SK-N-SH (cell line): ENCODE measurements at regions of chr19 and their contacts with region 1.

Region 1: GRCh38 chr19:47013041-47013517 is 6.6 kb upstream of the NPAS1 start:
- DNase-seq: peak; percentile 92
- H3K4me3 ChIP-seq: no peak overlapping the region; a peak in 1 of 4 replicates
- H3K27ac ChIP-seq: no peak overlapping the region
- H3K4me1 ChIP-seq: peaks cover 0 to 3% of the 10 kb centered on the region in 2 experiments; a peak in 1 of 4 replicates
- H3K27me3 ChIP-seq: no peaks in the 10 kb centered on the region
- CTCF ChIP-seq: peak; percentile 95
- EP300 ChIP-seq: 0 out of 4 replicates have a peak, but pooled peaks of 1 of the 2 experiments have one; percentile 17
- RAD21 ChIP-seq: peak; percentile 93

Region 2: DNA sequence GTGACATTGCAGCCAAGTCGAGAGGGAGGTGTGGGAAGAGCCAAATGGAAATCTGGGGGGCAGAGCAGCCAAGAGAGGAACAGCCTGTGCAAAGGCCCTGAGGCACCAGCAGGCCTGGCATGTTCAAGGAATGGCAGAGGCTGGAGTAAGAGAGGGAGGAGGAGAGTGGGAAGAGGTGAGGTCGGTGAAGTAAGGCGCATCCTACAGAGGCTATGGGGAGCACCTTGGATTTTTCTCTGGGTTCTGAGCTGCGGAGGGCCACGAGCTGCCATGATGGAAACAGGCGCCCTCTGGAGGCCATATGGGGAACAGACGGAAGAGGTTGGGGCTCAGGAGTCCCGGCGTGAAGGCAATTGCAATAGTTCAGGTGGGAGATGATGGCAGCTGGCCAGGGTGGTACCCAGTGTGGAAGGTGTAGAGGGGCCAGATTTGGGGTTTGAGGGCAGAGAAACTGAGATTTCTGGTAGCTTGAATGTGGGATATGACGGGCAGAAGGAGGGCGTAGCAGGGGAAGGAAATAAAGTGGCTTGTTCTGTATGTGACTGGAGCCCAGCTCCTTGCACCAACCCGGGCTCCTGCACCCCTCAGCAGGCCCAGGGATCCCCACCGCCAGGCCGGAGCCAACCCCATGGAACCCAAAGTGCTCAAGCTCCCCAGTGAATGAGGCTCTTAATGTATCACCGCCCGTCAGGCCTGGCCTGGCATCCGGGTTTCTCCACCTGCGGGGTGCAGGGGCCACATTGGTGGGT is 246.3 kb before region 1 on chr19:
- CTCF ChIA-PET with region 1: no interaction called
- POLR2A ChIA-PET with region 1: no interaction called
- DNase-seq: peak; percentile 74
- H3K4me3 ChIP-seq: no peak overlapping the region
- H3K27ac ChIP-seq: no peak overlapping the region
- H3K4me1 ChIP-seq: no peaks in the 10 kb centered on the region
- H3K27me3 ChIP-seq: no peaks in the 10 kb centered on the region
- CTCF ChIP-seq: peak; percentile 76
- EP300 ChIP-seq: no peak
- RAD21 ChIP-seq: peak; percentile 33

Region 3: DNA sequence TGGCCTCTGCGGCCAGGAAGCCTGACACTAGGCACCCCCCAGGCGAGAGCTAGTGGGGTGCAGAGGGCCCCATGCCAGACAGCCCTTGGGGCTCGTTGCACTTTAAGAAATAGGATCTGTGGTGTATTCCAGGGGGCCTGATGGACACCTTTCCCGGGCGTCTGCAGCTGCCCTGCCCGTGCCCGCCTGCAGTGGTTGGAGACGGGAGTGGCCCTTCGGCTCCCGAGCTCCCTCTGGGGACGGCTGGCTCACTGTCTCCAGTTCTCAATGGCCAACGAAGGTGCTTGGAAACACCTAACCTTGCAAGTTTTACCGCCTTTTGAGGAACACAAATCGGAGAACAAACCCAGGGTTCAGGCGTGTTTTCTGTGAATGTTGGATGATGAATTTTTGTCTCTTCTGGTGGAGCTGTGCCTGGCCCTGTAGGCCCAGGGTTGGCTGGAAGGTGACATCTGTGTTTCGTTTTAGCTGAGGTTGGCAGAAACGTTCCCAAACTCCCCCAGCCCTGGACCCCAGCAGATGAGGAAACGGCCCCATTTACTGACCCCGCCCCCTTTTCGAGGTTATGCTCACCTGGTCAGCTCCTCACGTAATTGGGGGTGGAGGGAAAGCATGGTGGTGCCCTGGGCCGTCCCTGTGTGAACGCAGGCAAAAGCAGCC is 10.8 kb before region 1 on chr19:
- CTCF ChIA-PET with region 1: interaction called, 18 read pairs
- POLR2A ChIA-PET with region 1: no interaction called
- DNase-seq: no peak
- H3K4me3 ChIP-seq: no peak overlapping the region
- H3K27ac ChIP-seq: no peak overlapping the region
- H3K4me1 ChIP-seq: peaks cover 0 to 9% of the 10 kb centered on the region in 2 experiments; a peak in 1 of 4 replicates
- H3K27me3 ChIP-seq: no peaks in the 10 kb centered on the region
- CTCF ChIP-seq: no peak
- EP300 ChIP-seq: no peak
- RAD21 ChIP-seq: no peak

Region 4: DNA sequence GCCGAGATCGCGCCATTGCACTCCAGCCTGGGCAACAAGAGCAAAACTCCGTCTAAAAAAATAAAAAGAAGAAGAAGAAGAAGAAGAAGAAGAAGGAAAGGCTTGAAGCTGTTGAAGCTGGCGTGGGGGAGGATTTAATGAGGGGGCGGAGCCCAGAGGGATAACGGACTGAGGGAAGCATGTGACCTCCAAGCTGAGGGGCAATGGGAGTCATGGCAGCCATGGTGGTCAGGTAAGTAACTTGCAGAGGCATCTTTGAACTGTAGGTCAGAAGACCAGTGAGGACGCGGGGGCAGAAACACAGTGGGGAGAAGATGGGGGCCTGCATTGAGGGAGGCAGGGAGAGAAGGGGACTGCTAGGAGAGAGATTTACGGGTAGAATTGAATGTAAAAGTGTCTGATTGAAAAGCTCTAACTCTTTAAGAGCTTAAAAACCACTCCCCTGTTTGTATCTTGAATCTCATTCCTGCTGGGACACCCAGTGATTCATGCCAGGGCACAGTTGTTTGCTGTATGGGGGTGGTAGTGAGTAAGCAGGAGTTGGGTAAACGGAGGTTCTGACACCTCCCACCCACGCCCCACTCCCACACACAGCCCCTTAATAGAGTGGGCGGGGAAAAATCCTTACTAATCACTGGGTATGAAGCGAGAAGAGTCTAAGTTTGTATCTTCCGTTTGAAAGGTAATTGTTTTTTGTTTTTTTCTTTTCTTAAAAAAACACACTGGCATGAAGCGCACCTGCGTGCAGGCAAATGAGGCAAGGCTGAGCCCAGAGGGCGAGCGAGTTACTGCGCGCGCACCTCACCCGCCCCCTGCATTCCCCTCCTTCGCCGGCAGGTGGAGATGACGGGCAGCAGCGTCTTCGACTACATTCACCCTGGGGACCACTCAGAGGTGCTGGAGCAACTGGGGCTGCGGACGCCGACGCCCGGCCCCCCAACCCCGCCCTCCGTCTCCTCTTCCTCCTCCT is 22.3 kb after region 1 on chr19:
- CTCF ChIA-PET with region 1: interaction called, 98 read pairs
- POLR2A ChIA-PET with region 1: no interaction called
- DNase-seq: peak; percentile 96
- H3K4me3 ChIP-seq: peak overlapping the region; percentile 48 to 64
- H3K27ac ChIP-seq: peak overlapping the region; percentile 28 to 71; a peak in 2 of 4 replicates
- H3K4me1 ChIP-seq: peaks cover 0 to 5% of the 10 kb centered on the region in 2 experiments; a peak in 1 of 4 replicates
- H3K27me3 ChIP-seq: no peaks in the 10 kb centered on the region
- CTCF ChIP-seq: peak; percentile 80
- EP300 ChIP-seq: no peak
- RAD21 ChIP-seq: peak; percentile 57

Region 5: DNA sequence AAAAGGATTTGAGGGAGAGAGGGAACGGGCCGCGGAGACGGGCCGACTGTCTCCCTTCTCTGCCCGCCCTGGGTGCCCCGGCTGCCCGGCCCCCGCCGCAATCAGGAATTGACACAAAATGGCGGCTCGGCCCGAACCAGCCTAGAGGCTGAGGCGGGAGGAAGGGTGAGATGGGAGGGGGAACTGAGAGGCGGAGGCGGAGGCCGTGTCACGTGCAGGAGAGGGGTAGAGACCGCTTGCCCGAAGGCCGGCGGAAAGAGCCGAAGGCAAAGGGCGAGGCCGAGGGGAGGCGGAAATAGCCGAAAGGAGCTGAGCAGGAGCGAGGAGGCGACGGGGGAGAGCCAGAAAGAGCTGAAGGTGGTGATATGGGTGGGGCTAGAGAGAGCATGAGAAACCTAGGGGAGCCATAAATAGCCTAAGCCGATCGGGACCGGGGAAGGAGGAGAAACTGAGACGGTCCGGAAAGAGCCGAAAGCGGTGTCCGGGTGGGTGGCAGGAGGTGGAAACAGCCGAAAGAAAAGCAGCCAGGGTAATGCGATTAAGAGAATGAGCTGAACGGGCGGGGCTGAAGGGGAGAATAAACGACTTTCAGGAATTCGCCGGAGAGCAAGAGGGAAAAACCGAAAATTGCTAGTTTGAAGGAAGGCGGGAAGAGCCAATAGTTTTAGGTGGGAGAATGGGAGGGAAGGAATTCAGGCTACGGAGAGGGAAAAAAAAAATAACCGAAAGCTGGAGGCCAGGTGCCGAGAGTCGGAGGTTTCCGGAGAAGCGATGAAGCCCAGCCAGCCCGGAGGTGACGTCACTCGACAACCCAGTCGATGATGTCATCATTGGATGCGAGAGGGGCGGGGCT is 100.1 kb after region 1 on chr19 and contains the start of gene ZC3H4:
- CTCF ChIA-PET with region 1: interaction called, 10 read pairs
- POLR2A ChIA-PET with region 1: interaction called, 3 read pairs
- DNase-seq: peak; percentile 92
- H3K4me3 ChIP-seq: peak within 1 kb of the TSS; percentile 78 to 92
- H3K27ac ChIP-seq: peak within 1 kb of the TSS; percentile 99 to 100
- H3K4me1 ChIP-seq: peaks cover 18 to 23% of the 10 kb centered on the region in 2 experiments
- H3K27me3 ChIP-seq: no peaks in the 10 kb centered on the region
- CTCF ChIP-seq: no peak
- EP300 ChIP-seq: peak in 1 of 2 experiments; percentile 28; a peak in 1 of 4 replicates
- RAD21 ChIP-seq: no peak
- polyA plus RNA-seq, gene ZC3H4: 3.9 and 7.6 TPM in 2 replicates

Region 6: GRCh38 chr19:47132194-47132852 is 119.2 kb after region 1 on chr19:
- CTCF ChIA-PET with region 1: interaction called, 10 read pairs
- POLR2A ChIA-PET with region 1: no interaction called
- DNase-seq: no peak
- H3K4me3 ChIP-seq: peak overlapping the region in 1 of 2 experiments; percentile 80; a peak in 2 of 4 replicates
- H3K27ac ChIP-seq: no peak overlapping the region
- H3K4me1 ChIP-seq: peaks cover 2 to 18% of the 10 kb centered on the region in 2 experiments; a peak in 3 of 4 replicates
- H3K27me3 ChIP-seq: no peaks in the 10 kb centered on the region
- CTCF ChIP-seq: no peak
- EP300 ChIP-seq: no peak
- RAD21 ChIP-seq: no peak

Region 7: DNA sequence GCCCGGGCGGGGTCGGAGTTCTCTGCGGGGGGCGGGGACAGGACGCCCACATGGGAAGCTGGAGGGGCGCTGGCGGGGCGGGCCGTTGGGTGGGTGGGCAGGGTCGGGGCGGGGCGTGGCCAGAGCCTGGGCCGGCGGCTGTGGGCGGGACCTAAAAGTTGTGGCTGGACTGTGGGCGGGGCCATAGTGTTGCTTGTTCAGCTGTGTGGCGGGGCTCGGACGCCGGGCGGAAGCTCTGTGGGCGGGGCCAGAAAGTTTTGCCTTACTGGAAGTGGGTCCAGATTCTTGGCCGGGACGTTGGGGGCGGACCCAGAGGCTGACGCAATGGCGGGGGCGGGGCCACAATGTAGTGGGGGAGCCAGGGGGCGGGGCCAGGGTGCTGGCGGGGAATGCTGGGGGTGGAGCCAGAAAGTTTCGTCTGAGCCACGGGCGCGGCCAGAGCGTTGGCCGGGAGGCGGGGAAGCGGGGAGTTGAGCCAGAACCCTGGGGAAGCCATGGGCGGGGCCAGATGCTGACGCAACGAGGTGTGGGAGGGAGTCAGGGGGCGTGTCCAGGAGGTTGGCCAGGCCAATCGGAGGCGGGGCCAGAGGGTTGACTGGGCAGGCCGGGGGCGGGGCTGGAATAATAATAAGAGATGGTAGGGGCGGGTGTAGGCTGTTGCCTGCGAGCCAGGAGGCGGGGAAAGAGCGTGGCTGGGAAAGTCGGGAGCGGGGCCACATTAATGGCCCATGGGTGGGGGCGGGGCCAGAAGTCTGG is 243.8 kb after region 1 on chr19:
- CTCF ChIA-PET with region 1: no interaction called
- POLR2A ChIA-PET with region 1: no interaction called
- DNase-seq: peak; percentile 97
- H3K4me3 ChIP-seq: peak overlapping the region; percentile 69 to 72
- H3K27ac ChIP-seq: peak overlapping the region; percentile 94
- H3K4me1 ChIP-seq: peaks cover 9 to 13% of the 10 kb centered on the region in 2 experiments; a peak in 2 of 4 replicates
- H3K27me3 ChIP-seq: no peaks in the 10 kb centered on the region
- CTCF ChIP-seq: no peak
- EP300 ChIP-seq: no peak
- RAD21 ChIP-seq: no peak